AG04450 (cell line): ENCODE measurements at regions of chr6 and their contacts with region 1.

Region 1: GRCh38 chr6:63802606-63803206 is 167.1 kb downstream of the PHF3 start:
- DNase-seq: no peak
- H3K4me3 ChIP-seq: no peak overlapping the region
- H3K27ac ChIP-seq: no peak overlapping the region
- H3K27me3 ChIP-seq: no peaks in the 10 kb centered on the region
- CTCF ChIP-seq: peak; percentile 78

Region 2: GRCh38 chr6:63307581-63308246 is 495.0 kb before region 1 on chr6:
- CTCF ChIA-PET with region 1: interaction called, 31 read pairs
- POLR2A ChIA-PET with region 1: no interaction called
- DNase-seq: peak; percentile 23
- H3K4me3 ChIP-seq: no peak overlapping the region
- H3K27ac ChIP-seq: no peak overlapping the region
- H3K27me3 ChIP-seq: no peaks in the 10 kb centered on the region
- CTCF ChIP-seq: peak; percentile 68

Region 3: DNA sequence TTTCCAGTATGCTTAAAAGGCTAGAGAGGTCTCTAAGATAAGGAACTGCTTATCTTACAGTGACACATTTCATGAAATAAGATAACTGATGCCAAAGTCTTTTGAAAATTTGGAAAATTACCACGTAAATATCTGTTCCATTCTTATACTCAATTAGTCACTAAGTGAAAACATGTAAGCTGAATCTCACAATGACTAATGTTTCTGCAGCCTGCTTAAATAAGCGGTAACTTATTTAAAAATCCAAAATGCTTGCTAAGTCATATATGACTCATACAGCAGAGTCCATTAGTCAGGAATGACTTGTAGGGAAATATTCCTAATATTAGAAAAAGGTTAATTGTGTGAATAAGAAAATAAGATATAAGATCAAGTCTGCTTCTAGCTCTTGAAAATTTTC is 455.1 kb before region 1 on chr6:
- CTCF ChIA-PET with region 1: interaction called, 72 read pairs
- POLR2A ChIA-PET with region 1: no interaction called
- DNase-seq: peak; percentile 51
- H3K4me3 ChIP-seq: no peak overlapping the region
- H3K27ac ChIP-seq: no peak overlapping the region
- H3K27me3 ChIP-seq: no peaks in the 10 kb centered on the region
- CTCF ChIP-seq: no peak

Region 4: GRCh38 chr6:63352587-63353285 is 450.0 kb before region 1 on chr6:
- CTCF ChIA-PET with region 1: interaction called, 72 read pairs
- POLR2A ChIA-PET with region 1: no interaction called
- DNase-seq: peak; percentile 15
- H3K4me3 ChIP-seq: no peak overlapping the region
- H3K27ac ChIP-seq: no peak overlapping the region
- H3K27me3 ChIP-seq: no peaks in the 10 kb centered on the region
- CTCF ChIP-seq: peak; percentile 73

Region 5: GRCh38 chr6:63403725-63404124 is 399.0 kb before region 1 on chr6:
- CTCF ChIA-PET with region 1: no interaction called
- POLR2A ChIA-PET with region 1: no interaction called
- DNase-seq: no peak
- H3K4me3 ChIP-seq: no peak overlapping the region
- H3K27ac ChIP-seq: no peak overlapping the region
- H3K27me3 ChIP-seq: no peaks in the 10 kb centered on the region
- CTCF ChIP-seq: no peak

Region 6: GRCh38 chr6:63643862-63644261 is 158.8 kb before region 1 on chr6:
- CTCF ChIA-PET with region 1: no interaction called
- POLR2A ChIA-PET with region 1: no interaction called
- DNase-seq: no peak
- H3K4me3 ChIP-seq: no peak overlapping the region
- H3K27ac ChIP-seq: no peak overlapping the region
- H3K27me3 ChIP-seq: no peaks in the 10 kb centered on the region
- CTCF ChIP-seq: no peak

Region 7: GRCh38 chr6:63764318-63764916 is 38.3 kb before region 1 on chr6:
- CTCF ChIA-PET with region 1: interaction called, 20 read pairs
- POLR2A ChIA-PET with region 1: no interaction called
- DNase-seq: peak; percentile 15
- H3K4me3 ChIP-seq: no peak overlapping the region
- H3K27ac ChIP-seq: no peak overlapping the region
- H3K27me3 ChIP-seq: no peaks in the 10 kb centered on the region
- CTCF ChIP-seq: peak; percentile 43

Region 8: GRCh38 chr6:63774961-63775360 is 27.7 kb before region 1 on chr6:
- CTCF ChIA-PET with region 1: interaction called, 11 read pairs
- POLR2A ChIA-PET with region 1: no interaction called
- DNase-seq: no peak
- H3K4me3 ChIP-seq: no peak overlapping the region
- H3K27ac ChIP-seq: no peak overlapping the region
- H3K27me3 ChIP-seq: no peaks in the 10 kb centered on the region
- CTCF ChIP-seq: no peak

Region 9: GRCh38 chr6:63813566-63814120 is 10.9 kb after region 1 on chr6:
- CTCF ChIA-PET with region 1: interaction called, 28 read pairs
- POLR2A ChIA-PET with region 1: no interaction called
- DNase-seq: no peak
- H3K4me3 ChIP-seq: no peak overlapping the region
- H3K27ac ChIP-seq: no peak overlapping the region
- H3K27me3 ChIP-seq: no peaks in the 10 kb centered on the region
- CTCF ChIP-seq: peak; percentile 26